ENCODE measurements at regions of chr20 and their contacts with region 1.

Region 1: GRCh38 chr20:36629719-36630681 is 16.0 kb downstream of the SLA2 start:
- DNase-seq: peak in 2 of 3 donors; percentile 71 to 84
- H3K4me3 ChIP-seq: peak overlapping the region in 4 of 7 experiments; percentile 2 to 48 (median 38)
- H3K27ac ChIP-seq: peak overlapping the region; percentile 20 to 59
- H3K4me1 ChIP-seq: peaks cover 3 to 32% (median 16%) of the 10 kb centered on the region in 4 experiments
- H3K27me3 ChIP-seq: no peaks in the 10 kb centered on the region

Region 2: GRCh38 chr20:36483919-36484808 is 145.8 kb before region 1 on chr20:
- CTCF ChIA-PET with region 1: no interaction called
- POLR2A ChIA-PET with region 1: no interaction called
- DNase-seq: no peak
- H3K4me3 ChIP-seq: no peak overlapping the region
- H3K27ac ChIP-seq: no peak overlapping the region
- H3K4me1 ChIP-seq: peaks cover 0 to 7% (median 1%) of the 10 kb centered on the region in 4 experiments
- H3K27me3 ChIP-seq: no peaks in the 10 kb centered on the region

Region 3: GRCh38 chr20:36645998-36646397 is 16.0 kb after region 1 on chr20 and contains the start of gene SLA2:
- CTCF ChIA-PET with region 1: interaction called, 29 read pairs
- POLR2A ChIA-PET with region 1: interaction called, 3 read pairs
- DNase-seq: peak; percentile 91 to 98 (median 97)
- H3K4me3 ChIP-seq: peak within 1 kb of the TSS in 6 of 7 experiments; percentile 13 to 74 (median 60)
- H3K27ac ChIP-seq: peak within 1 kb of the TSS; percentile 78 to 82
- H3K4me1 ChIP-seq: peaks cover 10 to 55% (median 41%) of the 10 kb centered on the region in 4 experiments
- H3K27me3 ChIP-seq: no peaks in the 10 kb centered on the region

Measured in common myeloid progenitor, CD34-positive (primary cell).